ENCODE measurements at regions of chr13 and their contacts with region 1.

Region 1: DNA sequence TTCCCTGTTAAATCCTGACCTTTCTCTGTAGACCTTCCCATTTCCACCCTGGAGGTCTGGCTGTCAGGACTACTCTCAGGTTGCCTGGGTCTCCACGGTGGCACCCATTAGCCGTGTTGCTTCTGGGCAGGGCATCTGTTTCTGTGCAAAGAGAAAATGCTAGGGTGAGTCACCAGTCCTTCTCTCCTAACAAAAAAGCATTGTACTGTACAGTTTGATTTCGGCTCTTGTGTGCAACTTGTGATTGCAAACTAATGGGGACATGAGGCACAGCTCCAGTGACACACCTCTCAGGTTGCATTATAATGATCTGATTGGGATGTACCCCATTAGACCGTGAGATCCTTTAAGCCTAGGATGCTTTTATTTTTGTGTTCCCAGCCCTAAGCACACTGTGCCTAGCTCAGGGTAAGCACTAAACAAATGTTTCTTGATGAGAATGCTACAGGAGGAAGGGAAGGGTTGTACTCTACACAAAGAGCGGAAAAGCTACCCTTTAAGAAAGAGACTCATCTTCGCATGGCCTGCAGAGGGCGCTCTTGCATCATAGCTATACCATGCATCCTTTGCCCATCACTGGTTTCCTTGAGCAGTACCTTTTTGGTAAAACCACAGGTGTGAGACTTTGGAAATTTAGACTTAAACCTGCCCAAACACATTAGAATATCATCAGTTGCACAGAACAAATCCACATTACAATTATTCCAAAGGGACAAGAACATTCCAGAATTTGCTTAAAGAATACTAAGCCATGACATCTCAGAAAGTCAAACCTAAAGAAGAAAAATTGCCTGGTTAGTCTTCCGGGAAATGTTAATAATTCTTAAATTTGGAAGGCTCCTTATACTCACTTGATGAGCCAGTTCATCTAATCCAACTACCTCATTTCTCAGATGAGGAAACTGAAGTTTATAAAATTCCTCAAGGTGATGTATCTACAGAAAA is 20.3 kb upstream of the TRIM13 start:
- DNase-seq: peak; percentile 75
- CTCF ChIP-seq: peak; percentile 84

Region 2: GRCh38 chr13:50319635-50320255 is 343.2 kb after region 1 on chr13:
- in situ Hi-C with region 1: no loop called
- DNase-seq: no peak
- CTCF ChIP-seq: no peak

Region 3: DNA sequence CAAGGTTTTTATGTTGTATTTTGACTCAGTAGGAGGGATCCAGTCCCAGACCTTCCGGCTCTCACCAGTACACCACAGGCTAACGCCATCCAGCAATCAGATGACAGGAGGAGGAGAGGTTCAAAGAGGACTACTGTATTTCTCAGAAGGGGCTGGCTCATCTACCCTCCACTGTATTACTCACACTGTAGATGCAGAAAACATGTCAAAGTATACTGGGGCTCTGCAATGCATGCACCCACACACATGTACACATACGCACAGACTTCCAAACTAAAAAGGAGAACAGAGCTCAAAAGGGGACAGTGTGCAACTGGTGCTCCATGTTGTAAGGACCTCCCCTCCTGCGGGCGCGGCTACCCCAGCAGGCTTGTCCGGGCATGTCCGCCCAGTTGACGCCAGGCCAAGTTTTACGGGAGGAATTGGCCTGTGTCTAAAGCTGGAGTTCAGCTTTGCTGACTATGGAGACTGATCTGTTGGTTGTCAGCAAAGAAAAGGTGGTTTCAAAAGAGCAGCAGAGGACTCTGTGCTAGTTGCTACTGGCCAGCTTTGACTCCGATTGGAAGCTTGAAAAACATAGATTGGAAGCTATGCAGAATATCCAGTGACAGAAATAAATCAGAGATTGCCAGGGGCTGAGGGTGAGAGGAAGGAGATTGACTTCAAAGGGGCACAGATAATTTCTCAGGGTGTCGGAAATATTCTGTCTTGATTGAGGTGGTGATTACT is 552.7 kb after region 1 on chr13:
- in situ Hi-C with region 1: loop called (anchors 10 kb)
- DNase-seq: no peak
- CTCF ChIP-seq: no peak

Region 4: DNA sequence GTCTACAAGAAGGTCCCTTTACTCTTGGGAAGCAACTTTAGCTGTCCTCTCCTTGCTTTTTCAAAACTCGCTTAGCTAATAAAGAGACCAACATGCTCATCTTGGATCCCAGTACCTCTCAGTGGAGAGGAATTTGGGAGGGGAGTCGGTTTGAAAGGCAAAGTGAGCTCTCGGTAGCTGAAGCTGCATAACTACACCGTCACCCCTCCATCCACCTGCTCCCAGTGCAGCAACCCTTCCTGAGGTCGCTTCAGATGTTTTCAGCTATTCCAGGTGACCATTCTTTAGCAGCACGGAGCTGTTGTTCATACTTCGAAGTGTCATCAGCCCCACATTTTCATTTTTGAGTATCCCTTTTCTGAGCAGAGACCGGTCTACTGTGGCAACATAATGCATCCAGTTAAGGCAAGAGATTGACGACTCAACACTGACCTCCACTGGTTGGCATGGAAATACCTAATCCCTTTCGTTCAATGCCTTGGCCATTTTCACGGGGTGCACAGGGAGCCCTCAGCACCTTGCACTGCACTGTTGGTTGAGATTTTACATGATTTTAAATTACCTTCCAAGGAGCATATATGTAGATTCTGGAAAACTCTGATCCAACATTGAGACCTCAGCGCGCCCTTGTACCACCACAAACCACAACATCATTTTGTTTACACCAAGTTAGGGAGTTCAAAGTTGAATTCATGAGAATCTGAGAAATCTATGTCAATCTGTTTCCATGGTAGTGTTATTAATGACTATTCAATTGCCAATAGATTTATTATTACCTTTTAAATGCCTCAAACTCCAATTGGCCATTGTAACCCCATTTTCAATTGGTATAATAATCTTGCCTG is 824.7 kb after region 1 on chr13:
- in situ Hi-C with region 1: loop called (anchors 10 kb)
- DNase-seq: peak; percentile 43
- CTCF ChIP-seq: peak; percentile 73